ENCODE measurements at regions of chr14 and their contacts with region 1.

Region 1: DNA sequence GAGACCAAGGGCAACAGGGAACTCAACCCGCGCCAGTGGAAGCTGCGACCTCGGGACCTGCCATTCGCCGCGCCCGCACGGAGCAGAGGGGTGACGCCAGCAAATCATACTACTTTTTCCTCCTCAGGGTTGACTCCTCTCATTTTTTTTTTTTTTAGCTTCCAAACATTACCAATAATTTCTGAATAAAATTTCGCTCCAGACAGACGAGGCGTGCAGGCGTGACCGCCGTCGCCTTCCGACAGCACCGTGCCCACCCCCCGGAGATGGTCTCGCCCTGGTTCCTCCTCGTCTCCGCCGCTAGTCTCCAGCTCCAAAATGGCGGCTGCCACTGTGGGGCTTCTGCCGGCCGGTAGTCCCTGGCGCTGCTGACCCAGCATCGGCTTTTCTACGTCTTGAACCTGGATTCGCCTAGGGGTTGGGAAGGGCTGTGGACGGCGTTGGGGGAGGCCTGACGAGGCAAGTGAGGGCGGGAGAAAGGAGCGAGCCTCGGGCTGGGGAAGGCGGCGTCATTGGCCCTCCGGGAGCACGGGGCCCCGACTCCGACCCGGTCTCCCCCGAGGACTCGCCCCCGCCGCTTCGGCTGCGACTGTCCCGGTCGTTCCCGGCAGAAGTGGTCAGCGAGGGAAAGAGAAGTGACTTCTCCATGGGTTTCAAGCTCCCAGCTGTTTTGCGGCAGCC is at the starts of genes CPSF2 and NDUFB1:
- DNase-seq: peak; percentile 96
- total RNA-seq, gene CPSF2: 42.0 to 50.5 TPM
- total RNA-seq, gene NDUFB1: 92.3 to 158 TPM

Region 2: GRCh38 chr14:92093320-92093719 is 28.5 kb before region 1 on chr14:
- intact Hi-C with region 1: no loop called
- DNase-seq: no peak

Region 3: DNA sequence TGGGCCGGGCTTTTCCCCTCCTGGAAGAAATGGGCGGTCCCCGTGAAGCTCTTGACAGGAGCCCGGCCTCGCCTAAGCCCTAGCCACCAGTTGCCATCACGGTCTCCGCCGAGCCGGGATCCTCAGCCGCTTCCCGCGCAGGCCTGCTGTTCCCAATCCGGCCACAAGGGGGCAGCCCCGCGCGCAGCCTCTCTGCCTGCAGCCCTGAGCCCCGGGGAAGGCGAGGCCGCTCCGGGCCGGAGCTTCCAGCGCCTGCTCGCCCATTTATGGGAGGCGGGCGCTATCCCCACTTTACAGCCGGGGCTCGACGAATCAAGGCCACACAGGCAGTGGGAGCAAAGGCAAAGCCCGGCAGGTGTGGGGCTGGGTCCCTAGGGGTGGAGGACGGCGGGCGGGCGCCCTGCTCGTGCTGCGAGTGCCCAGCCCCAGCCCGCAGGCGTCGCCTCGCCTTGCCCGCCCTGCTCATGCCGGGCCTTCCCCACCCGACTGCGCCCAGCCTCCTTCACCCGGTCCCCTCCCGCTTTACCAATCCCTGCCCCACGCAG is 565.2 kb after region 1 on chr14:
- intact Hi-C with region 1: loop called in 1 of 2 experiments (anchors 10 kb)
- DNase-seq: peak; percentile 94

Measured in posterior vena cava (tissue), 2 donors.